GM12878 (cell line): ENCODE measurements at regions of chr4 and their contacts with region 1.

Region 1: GRCh38 chr4:83212041-83212851 is 72.4 kb downstream of the COQ2 start:
- DNase-seq: peak; percentile 90
- ATAC-seq: peak; percentile 87
- H3K4me3 ChIP-seq: no peak overlapping the region
- H3K27ac ChIP-seq: peak overlapping the region; percentile 60
- H3K4me1 ChIP-seq: peaks cover 29% of the 10 kb centered on the region
- H3K27me3 ChIP-seq: no peaks in the 10 kb centered on the region
- CTCF ChIP-seq: no peak
- EP300 ChIP-seq: peak; percentile 70 to 88; a peak in 3 of 4 replicates
- POLR2A ChIP-seq: no peak
- RAD21 ChIP-seq: no peak

Region 2: GRCh38 chr4:83180431-83180968 is 31.7 kb before region 1 on chr4:
- CTCF ChIA-PET with region 1: interaction called, 7 read pairs
- POLR2A ChIA-PET with region 1: interaction called, 19 read pairs
- RAD21 ChIA-PET with region 1: interaction called, 27 read pairs
- SMC1A ChIA-PET with region 1: interaction called, 51 read pairs
- in situ Hi-C with region 1: no loop called
- intact Hi-C with region 1: loop called (anchors 1 kb)
- DNase-seq: peak; percentile 79
- ATAC-seq: peak; percentile 67
- H3K4me3 ChIP-seq: peak overlapping the region; percentile 33; the same call in 1 of the 2 replicates
- H3K27ac ChIP-seq: peak overlapping the region; percentile 29; the same call in 1 of the 2 replicates
- H3K4me1 ChIP-seq: peaks cover 30% of the 10 kb centered on the region
- H3K27me3 ChIP-seq: no peaks in the 10 kb centered on the region
- CTCF ChIP-seq: no peak
- EP300 ChIP-seq: peak; percentile 9 to 50; a peak in 1 of 4 replicates
- POLR2A ChIP-seq: no peak
- RAD21 ChIP-seq: no peak

Region 3: DNA sequence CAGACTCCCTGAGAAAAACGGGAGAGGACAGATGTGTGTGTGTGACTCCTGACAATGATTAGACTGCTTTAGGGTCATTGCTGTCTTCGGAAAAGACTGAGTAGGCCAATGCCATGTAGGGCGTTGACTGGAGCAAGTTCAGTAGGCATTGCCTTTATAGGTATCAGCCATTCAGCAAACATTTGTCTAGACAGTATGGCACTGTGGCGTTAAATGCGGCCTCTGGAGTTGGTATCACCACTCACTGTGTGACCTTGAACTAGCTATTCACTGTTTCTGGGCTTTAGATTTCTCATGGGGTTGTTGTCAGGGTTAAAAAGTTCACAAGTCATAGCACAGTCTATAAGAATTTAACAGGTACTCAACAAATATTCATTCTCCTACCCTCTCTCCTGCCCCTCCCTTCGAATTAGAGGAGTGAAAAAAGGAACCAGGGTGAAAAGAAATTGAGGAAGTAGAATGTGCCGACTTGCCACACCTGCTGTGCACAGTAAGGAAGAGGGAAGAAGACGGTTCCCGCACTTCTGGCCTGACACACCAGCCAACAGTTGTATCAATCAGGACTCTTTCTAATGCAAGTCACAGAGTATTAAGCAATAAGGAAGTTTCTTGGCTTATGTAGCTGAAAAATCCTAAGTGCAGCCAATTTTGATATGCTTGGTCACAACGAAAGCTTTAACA is 14.6 kb before region 1 on chr4:
- CTCF ChIA-PET with region 1: interaction called, 4 read pairs
- POLR2A ChIA-PET with region 1: interaction called, 5 read pairs
- RAD21 ChIA-PET with region 1: interaction called, 6 read pairs
- SMC1A ChIA-PET with region 1: interaction called, 48 read pairs
- in situ Hi-C with region 1: no loop called
- intact Hi-C with region 1: no loop called
- DNase-seq: no peak
- ATAC-seq: peak; percentile 82
- H3K4me3 ChIP-seq: no peak overlapping the region
- H3K27ac ChIP-seq: peak overlapping the region; percentile 32; the same call in 1 of the 2 replicates
- H3K4me1 ChIP-seq: peaks cover 10% of the 10 kb centered on the region
- H3K27me3 ChIP-seq: no peaks in the 10 kb centered on the region
- CTCF ChIP-seq: no peak
- EP300 ChIP-seq: no peak
- POLR2A ChIP-seq: no peak
- RAD21 ChIP-seq: no peak

Region 4: GRCh38 chr4:83240379-83240875 is 28.2 kb after region 1 on chr4:
- CTCF ChIA-PET with region 1: interaction called, 18 read pairs
- POLR2A ChIA-PET with region 1: interaction called, 18 read pairs
- RAD21 ChIA-PET with region 1: interaction called, 26 read pairs
- SMC1A ChIA-PET with region 1: interaction called, 152 read pairs
- in situ Hi-C with region 1: no loop called
- intact Hi-C with region 1: loop called (anchors 1 kb)
- DNase-seq: peak; percentile 96
- ATAC-seq: peak; percentile 90
- H3K4me3 ChIP-seq: no peak overlapping the region
- H3K27ac ChIP-seq: peak overlapping the region; percentile 75; the same call in 1 of the 2 replicates
- H3K4me1 ChIP-seq: peaks cover 20% of the 10 kb centered on the region
- H3K27me3 ChIP-seq: no peaks in the 10 kb centered on the region
- CTCF ChIP-seq: no peak
- EP300 ChIP-seq: peak; percentile 76 to 89; a peak in 3 of 4 replicates
- POLR2A ChIP-seq: no peak
- RAD21 ChIP-seq: no peak

Region 5: GRCh38 chr4:83629945-83630721 is 417.9 kb after region 1 on chr4:
- CTCF ChIA-PET with region 1: no interaction called
- POLR2A ChIA-PET with region 1: no interaction called
- RAD21 ChIA-PET with region 1: no interaction called
- SMC1A ChIA-PET with region 1: no interaction called
- in situ Hi-C with region 1: no loop called
- intact Hi-C with region 1: no loop called
- DNase-seq: no peak
- ATAC-seq: no peak
- H3K4me3 ChIP-seq: no peak overlapping the region
- H3K27ac ChIP-seq: no peak overlapping the region
- H3K4me1 ChIP-seq: no peaks in the 10 kb centered on the region
- H3K27me3 ChIP-seq: no peaks in the 10 kb centered on the region
- CTCF ChIP-seq: no peak
- EP300 ChIP-seq: no peak
- POLR2A ChIP-seq: no peak
- RAD21 ChIP-seq: no peak